ENCODE measurements at regions of chr1 and their contacts with region 1.

Region 1: GRCh38 chr1:162062542-162063015 is 6.9 kb upstream of the NOS1AP start:
- DNase-seq: no peak
- ATAC-seq: no peak
- H3K4me3 ChIP-seq: no peak overlapping the region
- H3K27ac ChIP-seq: no peak overlapping the region
- H3K4me1 ChIP-seq: no peaks in the 10 kb centered on the region
- H3K27me3 ChIP-seq: peaks cover 0 to 7% of the 10 kb centered on the region in 2 experiments; a peak in 1 of 5 replicates
- CTCF ChIP-seq: no peak
- EP300 ChIP-seq: no peak
- POLR2A ChIP-seq: no peak
- RAD21 ChIP-seq: no peak

Region 2: DNA sequence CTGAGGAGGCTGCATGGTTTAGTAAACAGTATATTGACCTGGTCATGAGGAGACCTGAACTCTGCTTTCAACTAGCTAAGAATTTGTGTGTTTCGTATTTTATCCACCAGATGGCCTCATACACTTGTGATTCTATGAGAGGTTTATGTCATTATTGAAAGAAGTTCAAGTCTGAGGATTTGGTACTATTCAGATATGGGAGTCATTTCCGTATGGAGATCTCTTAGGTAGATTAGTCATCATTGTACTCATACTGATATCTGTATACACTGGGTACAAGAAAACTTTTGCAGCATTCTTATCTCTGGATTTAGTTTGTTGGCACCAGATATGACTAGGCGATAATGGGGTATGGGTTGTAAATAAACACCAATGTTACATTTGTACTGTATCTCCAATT is 269.8 kb before region 1 on chr1:
- CTCF ChIA-PET with region 1: no interaction called
- POLR2A ChIA-PET with region 1: no interaction called
- in situ Hi-C with region 1: no loop called
- intact Hi-C with region 1: no loop called
- DNase-seq: peak; percentile 32 to 52 (median 50)
- ATAC-seq: peak; percentile 87
- H3K4me3 ChIP-seq: no peak overlapping the region
- H3K27ac ChIP-seq: no peak overlapping the region
- H3K4me1 ChIP-seq: no peaks in the 10 kb centered on the region; a peak in 1 of 5 replicates
- H3K27me3 ChIP-seq: no peaks in the 10 kb centered on the region
- CTCF ChIP-seq: peak in 2 of 3 experiments; percentile 46 to 67; a peak in 4 of 6 replicates
- EP300 ChIP-seq: no peak
- POLR2A ChIP-seq: no peak
- RAD21 ChIP-seq: peak; percentile 63 to 64

Region 3: GRCh38 chr1:161890574-161890973 is 172.0 kb before region 1 on chr1:
- CTCF ChIA-PET with region 1: no interaction called
- POLR2A ChIA-PET with region 1: no interaction called
- in situ Hi-C with region 1: no loop called
- intact Hi-C with region 1: no loop called
- DNase-seq: no peak
- ATAC-seq: no peak; the same call in 2 of the 3 replicates
- H3K4me3 ChIP-seq: no peak overlapping the region
- H3K27ac ChIP-seq: no peak overlapping the region
- H3K4me1 ChIP-seq: no peaks in the 10 kb centered on the region; a peak in 1 of 5 replicates
- H3K27me3 ChIP-seq: no peaks in the 10 kb centered on the region
- CTCF ChIP-seq: no peak
- EP300 ChIP-seq: no peak
- POLR2A ChIP-seq: no peak
- RAD21 ChIP-seq: no peak

Region 4: GRCh38 chr1:162270016-162270770 is 207.6 kb after region 1 on chr1:
- CTCF ChIA-PET with region 1: no interaction called
- POLR2A ChIA-PET with region 1: interaction called, 3 read pairs
- in situ Hi-C with region 1: loop called (anchors 5 kb)
- intact Hi-C with region 1: no loop called
- DNase-seq: no peak
- ATAC-seq: no peak
- H3K4me3 ChIP-seq: no peak overlapping the region
- H3K27ac ChIP-seq: no peak overlapping the region
- H3K4me1 ChIP-seq: peaks cover 0 to 9% of the 10 kb centered on the region in 2 experiments; a peak in 2 of 5 replicates
- H3K27me3 ChIP-seq: peaks cover 0 to 3% of the 10 kb centered on the region in 2 experiments; a peak in 1 of 5 replicates
- CTCF ChIP-seq: no peak
- EP300 ChIP-seq: no peak
- POLR2A ChIP-seq: no peak
- RAD21 ChIP-seq: no peak